ENCODE measurements at regions of chrX and their contacts with region 1.

Region 1: DNA sequence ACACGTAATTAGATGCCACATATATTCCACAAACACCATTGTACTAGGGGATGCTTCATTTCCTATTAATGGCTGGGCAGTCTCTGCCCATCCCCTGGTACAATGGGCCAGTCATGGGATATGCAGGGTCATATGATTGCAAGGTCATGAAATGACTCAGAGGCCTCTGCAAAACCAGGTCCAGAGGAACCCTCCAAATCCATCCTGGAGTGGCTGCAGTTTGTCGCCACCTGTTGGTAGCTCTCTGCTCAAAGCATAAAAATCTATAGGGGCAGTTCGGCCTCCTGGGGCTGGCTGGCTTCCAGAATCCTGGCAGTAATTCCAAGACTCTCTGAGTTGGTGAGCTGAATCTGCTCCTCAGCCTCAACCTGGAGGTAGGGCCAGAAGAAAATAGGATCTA is 22.9 kb upstream of the PUDP start:
- DNase-seq: no peak
- H3K4me3 ChIP-seq: no peak overlapping the region
- H3K27ac ChIP-seq: no peak overlapping the region
- H3K4me1 ChIP-seq: no peaks in the 10 kb centered on the region
- H3K27me3 ChIP-seq: no peaks in the 10 kb centered on the region
- CTCF ChIP-seq: peak; percentile 38 to 49

Region 2: GRCh38 chrX:7068939-7069371 is 101.9 kb before region 1 on chrX:
- CTCF ChIA-PET with region 1: no interaction called
- dilution Hi-C with region 1: no loop called
- in situ Hi-C with region 1: no loop called
- intact Hi-C with region 1: loop called (anchors 1 kb)
- DNase-seq: peak; percentile 60
- H3K4me3 ChIP-seq: no peak overlapping the region
- H3K27ac ChIP-seq: no peak overlapping the region
- H3K4me1 ChIP-seq: no peaks in the 10 kb centered on the region
- H3K27me3 ChIP-seq: no peaks in the 10 kb centered on the region
- CTCF ChIP-seq: peak; percentile 50 to 66

Region 3: GRCh38 chrX:7390441-7390840 is 219.5 kb after region 1 on chrX:
- CTCF ChIA-PET with region 1: no interaction called
- dilution Hi-C with region 1: no loop called
- in situ Hi-C with region 1: no loop called
- intact Hi-C with region 1: no loop called
- DNase-seq: no peak
- H3K4me3 ChIP-seq: no peak overlapping the region
- H3K27ac ChIP-seq: no peak overlapping the region
- H3K4me1 ChIP-seq: no peaks in the 10 kb centered on the region
- H3K27me3 ChIP-seq: no peaks in the 10 kb centered on the region
- CTCF ChIP-seq: no peak